MCF 10A (cell line): ENCODE measurements at regions of chr15 and their contacts with region 1.

Region 1: DNA sequence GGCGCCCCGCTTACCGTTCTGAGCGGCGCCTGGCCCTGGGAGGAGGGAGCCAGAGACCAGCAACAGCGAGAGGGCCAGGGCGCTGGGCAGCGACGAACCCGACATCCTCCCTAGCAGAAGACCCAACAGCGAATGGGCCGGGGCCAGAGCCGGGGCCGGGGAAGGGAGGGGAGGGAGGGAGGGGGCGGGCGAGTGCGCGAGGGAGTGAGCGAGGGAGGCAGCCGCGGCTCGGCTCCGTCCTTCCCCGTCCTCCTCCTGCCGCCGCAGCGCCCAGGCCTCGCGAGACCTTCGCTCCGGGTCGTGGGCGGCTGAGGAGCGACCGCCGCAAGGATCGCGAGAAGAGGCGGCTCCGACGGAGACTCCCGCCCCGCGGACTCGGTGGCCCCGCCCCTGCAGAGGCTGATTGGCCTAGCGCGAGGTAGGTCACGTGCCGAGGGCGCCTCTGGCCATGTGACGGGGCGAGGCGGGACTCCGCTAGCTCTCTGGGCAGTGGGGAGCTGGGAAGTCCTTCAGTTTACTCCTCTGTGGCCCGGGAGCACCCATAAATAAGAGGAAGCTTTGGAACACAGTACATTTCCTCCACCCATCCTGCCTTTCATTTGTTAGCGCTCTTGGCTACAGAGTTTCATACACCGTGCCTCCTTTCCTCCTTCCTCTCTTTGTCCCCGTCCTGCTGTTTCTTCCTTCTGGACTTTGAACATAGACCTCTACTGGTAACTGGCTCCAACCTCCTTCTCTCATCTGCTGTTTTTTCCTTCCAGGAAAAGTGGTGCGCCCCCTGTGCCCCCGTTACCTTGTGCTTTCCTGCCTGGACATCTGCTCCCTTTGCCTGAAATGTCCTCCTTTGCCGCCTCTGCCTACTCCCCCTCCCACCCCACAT is at the start of gene NPTN:
- DNase-seq: peak; percentile 97
- H3K4me3 Mint-ChIP-seq: peak within 1 kb of the TSS; percentile 80
- H3K27ac Mint-ChIP-seq: peak within 1 kb of the TSS; percentile 97
- H3K4me1 Mint-ChIP-seq: peaks cover 57% of the 10 kb centered on the region
- H3K27me3 Mint-ChIP-seq: no peaks in the 10 kb centered on the region
- CTCF ChIP-seq: no peak
- total RNA-seq, gene NPTN: 71.0 and 78.9 TPM in 2 replicates

Region 2: DNA sequence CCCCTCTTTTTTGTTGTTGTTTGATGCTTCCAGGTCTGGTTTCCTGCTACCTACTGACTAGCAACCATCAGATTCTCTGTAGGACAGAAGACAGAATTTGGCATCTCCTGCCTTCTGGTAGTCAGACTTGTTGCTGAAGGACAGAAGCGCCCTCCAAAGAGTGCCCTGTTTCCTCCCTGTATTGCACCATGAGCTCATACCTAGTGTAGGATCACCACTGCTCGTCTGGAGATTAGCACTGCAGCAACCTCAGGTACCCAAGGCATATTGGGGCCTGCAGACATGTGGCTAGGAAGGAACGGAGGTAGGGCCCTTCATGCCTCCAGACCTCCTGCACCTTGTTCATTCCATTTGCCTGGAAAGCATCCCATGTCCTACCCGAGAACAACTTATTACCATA is 78.3 kb before region 1 on chr15:
- CTCF ChIA-PET with region 1: interaction called, 94 read pairs
- POLR2A ChIA-PET with region 1: interaction called, 102 read pairs
- intact Hi-C with region 1: loop called (anchors 1 kb)
- DNase-seq: no peak
- H3K4me3 Mint-ChIP-seq: no peak overlapping the region
- H3K27ac Mint-ChIP-seq: no peak overlapping the region
- H3K4me1 Mint-ChIP-seq: no peaks in the 10 kb centered on the region
- H3K27me3 Mint-ChIP-seq: no peaks in the 10 kb centered on the region
- CTCF ChIP-seq: no peak

Region 3: GRCh38 chr15:73601451-73602445 is 31.6 kb before region 1 on chr15:
- CTCF ChIA-PET with region 1: interaction called, 32 read pairs
- POLR2A ChIA-PET with region 1: interaction called, 270 read pairs
- intact Hi-C with region 1: loop called (anchors 5 kb)
- DNase-seq: peak; percentile 60
- H3K4me3 Mint-ChIP-seq: no peak overlapping the region
- H3K27ac Mint-ChIP-seq: no peak overlapping the region
- H3K4me1 Mint-ChIP-seq: no peaks in the 10 kb centered on the region
- H3K27me3 Mint-ChIP-seq: no peaks in the 10 kb centered on the region
- CTCF ChIP-seq: no peak

Region 4: DNA sequence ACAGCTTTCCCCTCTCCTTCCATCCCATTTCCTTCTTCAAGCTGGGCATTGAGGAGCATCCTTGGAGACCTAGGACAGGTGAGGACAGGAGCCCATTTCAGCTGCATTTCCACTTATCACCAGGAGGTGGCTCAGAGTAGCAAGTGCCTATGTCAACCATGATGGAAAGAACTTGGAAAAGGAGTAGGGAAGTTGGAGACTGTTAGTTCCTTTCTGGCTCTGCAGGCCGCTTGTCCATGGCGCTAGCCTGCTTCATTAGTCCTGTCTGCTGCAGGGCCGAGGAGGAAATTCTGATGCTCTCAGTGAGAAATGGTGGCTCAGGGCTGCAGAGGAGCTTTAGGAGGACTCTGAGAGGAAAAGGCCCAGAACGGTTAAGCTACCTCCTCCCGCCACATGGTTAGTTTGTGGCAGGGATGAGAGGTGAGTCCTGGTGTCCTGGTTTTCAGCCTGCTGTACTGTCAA is 43.8 kb after region 1 on chr15:
- CTCF ChIA-PET with region 1: interaction called, 34 read pairs
- POLR2A ChIA-PET with region 1: interaction called, 91 read pairs
- intact Hi-C with region 1: loop called (anchors 1 kb)
- DNase-seq: peak; percentile 80
- H3K4me3 Mint-ChIP-seq: no peak overlapping the region
- H3K27ac Mint-ChIP-seq: no peak overlapping the region
- H3K4me1 Mint-ChIP-seq: peaks cover 2% of the 10 kb centered on the region
- H3K27me3 Mint-ChIP-seq: no peaks in the 10 kb centered on the region
- CTCF ChIP-seq: peak; percentile 81

Region 5: GRCh38 chr15:73697033-73697467 is 63.7 kb after region 1 on chr15:
- CTCF ChIA-PET with region 1: interaction called, 308 read pairs
- POLR2A ChIA-PET with region 1: interaction called, 73 read pairs
- intact Hi-C with region 1: loop called (anchors 1 kb)
- DNase-seq: peak; percentile 89
- H3K4me3 Mint-ChIP-seq: peak overlapping the region; percentile 39
- H3K27ac Mint-ChIP-seq: peak overlapping the region; percentile 72
- H3K4me1 Mint-ChIP-seq: peaks cover 58% of the 10 kb centered on the region
- H3K27me3 Mint-ChIP-seq: no peaks in the 10 kb centered on the region
- CTCF ChIP-seq: no peak

Region 6: GRCh38 chr15:74322181-74323076 is 689.1 kb after region 1 on chr15:
- CTCF ChIA-PET with region 1: no interaction called
- POLR2A ChIA-PET with region 1: no interaction called
- intact Hi-C with region 1: no loop called
- DNase-seq: peak; percentile 62
- H3K4me3 Mint-ChIP-seq: no peak overlapping the region
- H3K27ac Mint-ChIP-seq: no peak overlapping the region
- H3K4me1 Mint-ChIP-seq: no peaks in the 10 kb centered on the region
- H3K27me3 Mint-ChIP-seq: no peaks in the 10 kb centered on the region
- CTCF ChIP-seq: peak; percentile 91